Natural killer cell (primary cell): ENCODE measurements at regions of chr6 and their contacts with region 1.

Region 1: GRCh38 chr6:431986-432385 is 40.4 kb downstream of the IRF4 start:
- DNase-seq: peak; percentile 36 to 45
- ATAC-seq: peak; percentile 54 to 87 (median 78)
- H3K4me3 ChIP-seq: no peak overlapping the region
- H3K4me3 Mint-ChIP-seq: no peak overlapping the region
- H3K27ac ChIP-seq: no peak overlapping the region
- H3K27ac Mint-ChIP-seq: peak overlapping the region in 1 of 2 donors; percentile 67
- H3K4me1 ChIP-seq: peaks cover 28% of the 10 kb centered on the region
- H3K4me1 Mint-ChIP-seq: peaks cover 40% of the 10 kb centered on the region in 2 donors
- H3K27me3 ChIP-seq: no peaks in the 10 kb centered on the region
- H3K27me3 Mint-ChIP-seq: peaks cover 0 to 3% of the 10 kb centered on the region in 2 donors
- CTCF ChIP-seq: no peak

Region 2: GRCh38 chr6:181049-181654 is 250.8 kb before region 1 on chr6:
- intact Hi-C with region 1: no loop called
- DNase-seq: no peak
- ATAC-seq: no peak
- H3K4me3 ChIP-seq: no peak overlapping the region
- H3K4me3 Mint-ChIP-seq: no peak overlapping the region
- H3K27ac ChIP-seq: no peak overlapping the region
- H3K27ac Mint-ChIP-seq: no peak overlapping the region
- H3K4me1 ChIP-seq: peaks cover 8% of the 10 kb centered on the region
- H3K4me1 Mint-ChIP-seq: peaks cover 8 to 9% of the 10 kb centered on the region in 2 donors
- H3K27me3 ChIP-seq: no peaks in the 10 kb centered on the region
- H3K27me3 Mint-ChIP-seq: peaks cover 17 to 24% of the 10 kb centered on the region in 2 donors
- CTCF ChIP-seq: no peak

Region 3: DNA sequence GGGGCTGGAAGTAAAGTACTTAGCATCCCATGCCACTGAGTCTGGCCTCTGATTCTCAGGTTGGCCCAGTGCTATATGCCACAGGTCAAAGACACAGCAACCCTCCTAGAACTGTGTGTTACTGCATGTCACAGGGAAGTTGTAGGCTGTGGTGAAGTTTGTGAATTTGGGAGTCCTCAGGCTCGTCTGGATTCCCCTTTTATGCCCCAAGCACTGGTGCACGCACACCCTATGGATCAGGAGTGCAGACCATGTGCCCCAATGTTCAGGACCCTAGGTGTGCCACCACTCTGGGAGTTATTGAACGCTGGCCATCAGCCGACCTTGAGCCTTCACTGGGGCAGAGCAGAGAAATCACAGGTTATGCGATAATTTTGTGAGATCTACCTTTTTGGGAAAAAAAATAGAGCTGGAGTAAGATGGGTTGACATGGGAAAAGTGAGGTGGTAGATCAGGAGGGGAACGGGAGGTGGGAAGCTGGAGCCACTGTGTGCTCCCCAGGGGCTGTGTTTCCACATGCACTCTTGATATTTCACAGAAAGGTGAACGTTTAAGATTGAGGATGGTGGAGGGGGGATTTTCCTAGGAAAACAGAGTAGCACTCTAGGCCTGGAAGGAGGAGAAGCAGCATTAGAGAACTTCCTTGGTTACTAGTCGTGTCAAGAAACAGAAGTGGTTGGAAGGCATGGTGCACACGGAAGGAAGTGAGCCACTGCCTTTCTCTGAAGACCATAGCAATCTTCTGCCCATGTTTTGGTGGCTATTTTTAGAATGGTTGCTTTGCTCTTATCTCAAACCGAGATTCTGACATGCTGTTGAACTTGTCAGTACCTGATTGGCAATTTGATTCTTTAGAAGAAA is 95.6 kb before region 1 on chr6:
- intact Hi-C with region 1: loop called (anchors 5 kb)
- DNase-seq: peak in 1 of 2 donors; percentile 38
- ATAC-seq: peak; percentile 22 to 45 (median 43)
- H3K4me3 ChIP-seq: no peak overlapping the region
- H3K4me3 Mint-ChIP-seq: no peak overlapping the region
- H3K27ac ChIP-seq: peak overlapping the region; percentile 35
- H3K27ac Mint-ChIP-seq: peak overlapping the region; percentile 23 to 34
- H3K4me1 ChIP-seq: peaks cover 61% of the 10 kb centered on the region
- H3K4me1 Mint-ChIP-seq: peaks cover 51 to 56% of the 10 kb centered on the region in 2 donors
- H3K27me3 ChIP-seq: no peaks in the 10 kb centered on the region
- H3K27me3 Mint-ChIP-seq: no peaks in the 10 kb centered on the region
- CTCF ChIP-seq: no peak

Region 4: GRCh38 chr6:490251-491037 is 58.5 kb after region 1 on chr6:
- intact Hi-C with region 1: loop called (anchors 5 kb)
- DNase-seq: peak in 1 of 2 donors; percentile 39
- ATAC-seq: peak; percentile 56 to 57 (median 57)
- H3K4me3 ChIP-seq: no peak overlapping the region
- H3K4me3 Mint-ChIP-seq: peak overlapping the region; percentile 67
- H3K27ac ChIP-seq: peak overlapping the region; percentile 45
- H3K27ac Mint-ChIP-seq: peak overlapping the region; percentile 87 to 92
- H3K4me1 ChIP-seq: peaks cover 27% of the 10 kb centered on the region
- H3K4me1 Mint-ChIP-seq: peaks cover 57 to 58% of the 10 kb centered on the region in 2 donors
- H3K27me3 ChIP-seq: no peaks in the 10 kb centered on the region
- H3K27me3 Mint-ChIP-seq: no peaks in the 10 kb centered on the region
- CTCF ChIP-seq: no peak